ENCODE measurements at regions of chr19 and their contacts with region 1.

Region 1: DNA sequence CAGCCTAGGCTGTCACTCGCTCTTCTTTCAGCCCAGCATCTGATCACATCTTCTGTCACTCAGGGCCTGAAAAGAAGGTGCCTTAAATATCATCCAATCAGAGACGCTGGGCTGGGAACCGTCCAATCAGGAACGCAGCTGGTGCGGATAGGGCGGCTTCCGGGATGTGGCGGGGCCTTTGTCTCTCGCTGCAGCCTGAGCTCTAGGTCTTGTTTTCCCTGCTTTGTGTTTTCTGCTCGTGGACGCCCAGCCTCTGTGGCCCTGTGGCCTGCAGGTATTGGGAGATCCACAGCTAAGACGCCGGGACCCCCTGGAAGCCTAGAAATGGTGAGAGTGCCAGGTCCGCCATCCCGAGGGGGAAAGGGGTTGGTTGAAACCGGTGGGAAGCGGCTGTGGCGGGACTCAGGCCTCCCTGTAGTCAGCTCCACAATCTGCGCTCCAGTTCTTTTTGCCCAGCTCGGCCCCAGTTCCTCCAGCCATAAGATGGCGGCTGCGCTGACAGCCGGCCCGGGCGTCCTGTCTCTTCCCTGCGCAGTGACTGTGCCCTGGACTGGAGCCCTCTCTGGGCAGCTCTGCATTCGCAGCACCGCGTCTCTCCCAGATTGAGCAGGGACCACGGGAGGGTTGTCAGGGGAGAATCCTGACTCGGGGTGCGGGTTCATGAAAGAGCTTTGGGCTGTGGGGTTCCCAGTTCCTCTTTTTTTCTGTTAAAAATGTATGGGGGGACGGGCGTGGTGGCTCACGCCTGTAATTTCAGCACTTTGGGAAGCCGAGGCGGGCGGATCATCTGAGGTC is at the start of gene ZNF85:
- DNase-seq: peak; percentile 95
- ATAC-seq: peak; percentile 99
- H3K4me3 Mint-ChIP-seq: peak within 1 kb of the TSS; percentile 91
- H3K27ac Mint-ChIP-seq: peak within 1 kb of the TSS; percentile 96
- H3K4me1 Mint-ChIP-seq: peaks cover 25% of the 10 kb centered on the region
- H3K27me3 Mint-ChIP-seq: no peaks in the 10 kb centered on the region
- total RNA-seq, gene ZNF85: 23.2 to 29.3 TPM

Region 2: GRCh38 chr19:20423381-20424197 is 499.7 kb before region 1 on chr19:
- CTCF ChIA-PET with region 1: no interaction called
- POLR2A ChIA-PET with region 1: no interaction called
- intact Hi-C with region 1: loop called in 1 of 2 experiments (anchors 2 kb)
- DNase-seq: peak; percentile 61
- ATAC-seq: no peak
- H3K4me3 Mint-ChIP-seq: peak overlapping the region; percentile 96
- H3K27ac Mint-ChIP-seq: peak overlapping the region; percentile 99
- H3K4me1 Mint-ChIP-seq: peaks cover 9% of the 10 kb centered on the region
- H3K27me3 Mint-ChIP-seq: no peaks in the 10 kb centered on the region

Region 3: DNA sequence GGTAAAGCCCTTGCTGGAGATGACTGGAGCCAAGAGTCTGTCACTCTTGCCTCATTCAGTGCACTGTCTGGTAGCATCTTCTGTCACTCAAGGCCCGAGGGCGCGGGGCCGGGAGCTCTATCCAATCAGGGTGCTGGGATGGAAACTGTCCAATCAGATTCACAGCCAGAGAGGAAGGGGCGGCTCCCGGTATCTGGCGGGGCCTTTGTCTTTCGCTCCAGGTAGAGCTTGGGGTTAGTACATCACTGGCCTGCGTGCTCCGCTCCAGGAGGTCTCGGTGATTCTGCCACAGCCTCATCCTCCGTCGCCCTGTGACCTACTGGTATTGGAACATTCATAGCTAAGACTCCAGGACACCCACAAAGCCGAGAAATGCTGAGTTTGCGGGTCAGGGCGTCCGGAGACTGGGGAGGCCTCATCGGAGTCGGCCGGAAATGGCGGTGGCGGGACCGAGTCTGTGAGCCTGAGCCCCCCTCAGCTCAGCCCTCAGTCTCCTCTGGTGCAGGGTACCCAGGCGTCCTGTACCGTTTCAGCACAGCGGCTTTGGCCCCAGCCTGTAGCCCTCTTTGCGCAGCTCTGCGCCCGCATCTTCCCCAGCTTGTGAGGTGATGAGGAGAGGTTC is 76.6 kb after region 1 on chr19:
- CTCF ChIA-PET with region 1: no interaction called
- POLR2A ChIA-PET with region 1: interaction called, 10 read pairs
- intact Hi-C with region 1: loop called (anchors 1 to 2 kb)
- DNase-seq: peak; percentile 95
- ATAC-seq: peak; percentile 100
- H3K4me3 Mint-ChIP-seq: peak overlapping the region; percentile 89
- H3K27ac Mint-ChIP-seq: peak overlapping the region; percentile 91
- H3K4me1 Mint-ChIP-seq: peaks cover 9% of the 10 kb centered on the region
- H3K27me3 Mint-ChIP-seq: no peaks in the 10 kb centered on the region

Region 4: GRCh38 chr19:21052902-21053301 is 129.6 kb after region 1 on chr19:
- CTCF ChIA-PET with region 1: no interaction called
- POLR2A ChIA-PET with region 1: no interaction called
- intact Hi-C with region 1: no loop called
- DNase-seq: no peak
- ATAC-seq: no peak
- H3K4me3 Mint-ChIP-seq: no peak overlapping the region
- H3K27ac Mint-ChIP-seq: no peak overlapping the region
- H3K4me1 Mint-ChIP-seq: no peaks in the 10 kb centered on the region
- H3K27me3 Mint-ChIP-seq: no peaks in the 10 kb centered on the region

Region 5: DNA sequence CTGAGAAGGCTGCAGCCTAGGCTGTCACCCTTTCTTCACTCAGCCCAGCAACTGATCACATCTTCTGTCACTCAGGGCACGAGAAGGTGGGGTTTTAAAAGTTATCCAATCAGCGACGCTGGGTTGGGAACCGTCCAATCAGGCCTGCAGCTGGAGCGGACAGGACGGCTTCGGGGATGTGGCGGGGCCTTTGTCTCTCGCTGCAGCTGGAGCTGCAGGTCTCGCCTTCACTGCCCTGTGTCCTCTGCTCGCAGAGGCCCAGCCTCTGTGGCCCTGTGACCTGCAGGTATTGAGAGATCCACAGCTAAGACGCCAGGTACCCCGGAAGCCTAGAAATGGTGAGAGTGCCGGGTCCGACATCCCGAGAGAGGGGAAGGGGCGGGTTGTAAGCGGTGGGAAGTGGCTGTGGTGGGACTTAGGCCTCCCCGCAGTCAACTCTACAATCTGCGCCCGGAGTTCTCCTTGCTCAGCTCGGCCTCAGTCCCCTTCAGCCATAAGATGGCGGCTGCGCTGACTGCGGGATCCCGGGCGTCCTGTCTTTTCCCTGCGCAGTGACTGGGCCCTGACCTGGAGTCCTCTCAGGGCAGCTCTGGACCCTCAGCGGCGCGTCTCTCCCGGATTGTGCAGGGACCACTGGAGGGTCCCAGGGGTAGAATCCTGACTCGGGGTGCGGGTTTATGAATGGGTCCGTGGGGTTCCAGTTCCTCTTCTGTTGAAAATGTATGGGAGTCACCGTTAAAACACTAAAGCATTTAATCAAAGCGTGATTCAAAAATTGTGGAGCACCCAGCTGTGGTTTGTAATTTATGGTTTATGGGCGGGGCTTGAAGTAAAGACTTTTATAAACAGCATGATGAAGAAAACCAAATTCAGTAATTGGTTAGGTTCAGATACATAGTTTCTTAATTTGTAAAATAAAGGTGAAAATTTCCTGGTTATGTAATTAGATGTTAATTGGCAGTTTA is 159.0 kb after region 1 on chr19 and contains the start of gene ZNF714:
- CTCF ChIA-PET with region 1: no interaction called
- POLR2A ChIA-PET with region 1: no interaction called
- intact Hi-C with region 1: loop called in 1 of 2 experiments (anchors 2 kb)
- DNase-seq: peak; percentile 89
- ATAC-seq: peak; percentile 98
- H3K4me3 Mint-ChIP-seq: peak within 1 kb of the TSS; percentile 99
- H3K27ac Mint-ChIP-seq: peak within 1 kb of the TSS; percentile 97
- H3K4me1 Mint-ChIP-seq: peaks cover 24% of the 10 kb centered on the region
- H3K27me3 Mint-ChIP-seq: no peaks in the 10 kb centered on the region
- total RNA-seq, gene ZNF714: 17.4 to 20.0 TPM

Region 6: DNA sequence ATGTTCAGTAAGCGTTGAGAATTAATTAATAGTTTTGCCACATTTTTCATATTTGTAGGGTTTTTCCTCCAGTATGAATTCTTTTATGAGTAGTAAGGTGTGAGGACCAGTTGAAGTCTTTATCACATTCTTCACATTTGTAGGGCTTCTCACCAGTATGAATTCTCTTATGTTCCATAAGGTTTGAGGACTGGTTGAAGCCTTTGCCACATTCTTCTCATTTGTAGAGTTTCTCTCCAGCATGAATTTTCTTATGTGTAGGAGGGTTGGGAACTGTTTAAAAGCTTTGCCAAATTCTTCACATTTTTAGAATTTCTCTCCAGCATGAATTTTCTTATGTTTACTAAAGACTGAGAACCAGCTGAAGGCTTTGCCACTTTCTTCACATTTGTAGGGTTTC is 1047.2 kb after region 1 on chr19:
- CTCF ChIA-PET with region 1: no interaction called
- POLR2A ChIA-PET with region 1: no interaction called
- intact Hi-C with region 1: no loop called
- DNase-seq: no peak
- ATAC-seq: no peak
- H3K4me3 Mint-ChIP-seq: no peak overlapping the region
- H3K27ac Mint-ChIP-seq: no peak overlapping the region
- H3K4me1 Mint-ChIP-seq: no peaks in the 10 kb centered on the region
- H3K27me3 Mint-ChIP-seq: no peaks in the 10 kb centered on the region